ENCODE measurements at regions of chr22 and their contacts with region 1.

Region 1: DNA sequence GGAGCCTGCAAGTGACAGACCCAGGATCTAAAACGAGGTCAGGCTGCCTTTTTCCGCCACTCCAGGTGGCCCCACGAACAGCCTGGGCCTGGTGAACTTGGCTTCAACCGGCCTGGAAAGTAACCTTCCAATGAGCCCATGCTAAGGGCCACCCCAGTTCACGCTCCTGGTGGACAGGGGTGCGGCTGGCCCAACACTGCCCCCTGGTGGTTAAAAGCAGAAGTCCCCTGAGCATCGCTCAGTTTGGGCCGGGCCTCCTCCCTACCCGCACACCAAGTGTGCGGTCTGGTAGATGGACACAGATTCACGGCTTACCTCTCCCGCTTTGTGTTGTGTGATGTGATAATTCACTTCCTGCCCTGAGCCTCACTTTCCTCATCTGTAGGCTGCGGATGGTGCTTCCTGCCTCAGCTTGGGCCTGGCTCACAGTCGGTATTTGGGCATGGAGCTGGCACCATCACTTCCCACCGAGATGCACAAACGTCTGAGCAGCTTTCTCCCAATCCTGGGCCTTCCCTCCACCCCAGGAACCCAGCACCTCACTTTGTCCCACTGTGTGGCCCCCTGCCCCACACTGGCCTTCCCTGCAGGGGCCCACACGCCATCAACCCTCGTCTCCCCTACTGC is 13.7 kb upstream of the SEC14L3 start:
- DNase-seq: peak; percentile 80
- ATAC-seq: peak; percentile 84

Region 2: DNA sequence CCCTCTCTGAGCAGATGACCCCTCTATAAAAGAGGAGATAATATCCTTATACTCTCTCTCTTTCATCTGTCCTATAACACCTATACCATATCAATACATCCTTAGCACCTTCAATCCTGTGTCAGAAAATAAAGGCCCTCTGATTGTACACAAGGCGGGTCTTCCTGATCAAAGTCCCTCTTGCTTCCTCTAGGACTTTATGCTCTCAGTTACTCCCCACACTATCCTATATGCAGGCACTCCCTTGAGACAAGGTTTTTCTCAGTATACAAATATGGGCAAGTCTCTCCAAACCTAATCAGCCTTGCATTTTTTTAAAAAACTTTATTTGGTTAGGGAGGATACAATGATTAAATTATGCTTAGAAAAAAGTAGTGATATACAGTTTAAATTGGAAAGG is 422.5 kb before region 1 on chr22:
- intact Hi-C with region 1: no loop called
- DNase-seq: no peak
- ATAC-seq: no peak

Region 3: GRCh38 chr22:30444632-30445437 is 40.6 kb before region 1 on chr22:
- intact Hi-C with region 1: loop called (anchors 5 kb)
- DNase-seq: peak; percentile 47
- ATAC-seq: no peak

Measured in Right ventricle myocardium inferior (tissue), 1 donor.